ENCODE measurements at regions of chr2 and their contacts with region 1.

Region 1: GRCh38 chr2:240832205-240832727 is 12.2 kb upstream of the KIF1A start:
- DNase-seq: peak; percentile 96 to 99 (median 99)
- ATAC-seq: peak; percentile 93
- H3K4me3 ChIP-seq: peak overlapping the region; percentile 49 to 64
- H3K4me3 Mint-ChIP-seq: no peak overlapping the region
- H3K27ac ChIP-seq: peak overlapping the region in 1 of 2 experiments; percentile 19
- H3K27ac Mint-ChIP-seq: no peak overlapping the region
- H3K4me1 ChIP-seq: peaks cover 11% of the 10 kb centered on the region
- H3K4me1 Mint-ChIP-seq: peaks cover 6% of the 10 kb centered on the region
- H3K27me3 ChIP-seq: peaks cover 4 to 9% of the 10 kb centered on the region in 2 experiments
- H3K27me3 Mint-ChIP-seq: peaks cover 12% of the 10 kb centered on the region
- CTCF ChIP-seq: no peak

Region 2: DNA sequence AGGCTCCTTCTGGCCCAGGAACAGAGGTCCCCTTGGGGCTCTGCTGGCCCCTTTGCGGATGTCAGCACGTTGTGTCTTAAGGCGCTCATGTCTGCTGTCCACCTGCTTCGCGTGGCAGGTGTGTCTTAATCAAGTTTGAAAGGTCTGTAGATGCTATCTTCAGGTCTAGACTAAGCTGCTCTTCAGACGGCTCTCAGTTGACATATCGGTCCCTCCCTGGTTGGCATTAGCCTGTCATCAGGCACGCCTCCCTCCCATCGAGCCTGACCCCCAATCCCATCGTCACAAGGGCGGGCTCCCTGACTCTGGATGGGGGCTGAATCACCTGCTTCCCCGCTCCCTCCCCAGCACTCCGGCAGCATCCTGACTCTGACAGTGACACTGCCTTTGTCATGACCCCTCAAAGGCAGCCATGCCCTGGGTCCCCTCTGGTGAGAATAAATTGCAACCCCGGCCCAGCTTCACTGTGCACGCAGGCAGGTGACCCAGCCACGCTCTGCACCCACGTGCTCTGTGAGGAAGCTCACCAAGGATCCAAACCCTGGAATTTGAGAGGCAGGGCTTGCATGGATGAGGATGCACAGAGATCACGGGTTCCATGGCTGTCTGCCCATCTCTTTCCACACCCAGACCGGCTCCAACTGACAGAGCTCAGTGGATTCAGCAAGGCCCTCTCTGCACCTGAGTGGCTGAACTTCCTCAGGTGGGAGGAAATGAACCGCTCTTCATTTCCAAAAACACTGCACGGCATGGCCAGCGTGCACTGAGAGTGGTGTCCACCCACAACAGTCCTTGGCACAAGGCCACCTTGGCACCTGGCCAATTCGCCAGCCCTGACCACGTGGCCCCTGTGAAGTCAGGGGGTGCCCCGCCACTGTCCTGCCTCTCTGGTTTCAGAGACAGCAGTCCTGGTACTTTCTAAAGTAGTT is 507.0 kb before region 1 on chr2:
- CTCF ChIA-PET with region 1: no interaction called
- POLR2A ChIA-PET with region 1: no interaction called
- intact Hi-C with region 1: no loop called
- DNase-seq: no peak
- ATAC-seq: no peak
- H3K4me3 ChIP-seq: no peak overlapping the region
- H3K4me3 Mint-ChIP-seq: no peak overlapping the region
- H3K27ac ChIP-seq: no peak overlapping the region
- H3K27ac Mint-ChIP-seq: no peak overlapping the region
- H3K4me1 ChIP-seq: no peaks in the 10 kb centered on the region
- H3K4me1 Mint-ChIP-seq: no peaks in the 10 kb centered on the region
- H3K27me3 ChIP-seq: no peaks in the 10 kb centered on the region
- H3K27me3 Mint-ChIP-seq: peaks cover 8% of the 10 kb centered on the region
- CTCF ChIP-seq: no peak

Region 3: GRCh38 chr2:240434728-240435456 is 397.4 kb before region 1 on chr2:
- CTCF ChIA-PET with region 1: no interaction called
- POLR2A ChIA-PET with region 1: no interaction called
- intact Hi-C with region 1: loop called in 1 of 2 experiments (anchors 2 kb)
- DNase-seq: peak; percentile 67 to 91 (median 90)
- ATAC-seq: peak; percentile 86
- H3K4me3 ChIP-seq: peak overlapping the region; percentile 50 to 65
- H3K4me3 Mint-ChIP-seq: peak overlapping the region; percentile 85
- H3K27ac ChIP-seq: no peak overlapping the region
- H3K27ac Mint-ChIP-seq: no peak overlapping the region
- H3K4me1 ChIP-seq: peaks cover 10% of the 10 kb centered on the region
- H3K4me1 Mint-ChIP-seq: peaks cover 6% of the 10 kb centered on the region
- H3K27me3 ChIP-seq: peaks cover 15 to 17% of the 10 kb centered on the region in 2 experiments
- H3K27me3 Mint-ChIP-seq: peaks cover 18% of the 10 kb centered on the region
- CTCF ChIP-seq: no peak

Region 4: GRCh38 chr2:240586198-240586918 is 245.9 kb before region 1 on chr2 and contains the start of gene CAPN10:
- CTCF ChIA-PET with region 1: no interaction called
- POLR2A ChIA-PET with region 1: no interaction called
- intact Hi-C with region 1: loop called (anchors 1 kb)
- DNase-seq: peak; percentile 92 to 98 (median 97)
- ATAC-seq: peak; percentile 80
- H3K4me3 ChIP-seq: peak within 1 kb of the TSS; percentile 82 to 95
- H3K4me3 Mint-ChIP-seq: peak within 1 kb of the TSS; percentile 88
- H3K27ac ChIP-seq: peak within 1 kb of the TSS; percentile 86 to 90
- H3K27ac Mint-ChIP-seq: peak within 1 kb of the TSS; percentile 94
- H3K4me1 ChIP-seq: peaks cover 37% of the 10 kb centered on the region
- H3K4me1 Mint-ChIP-seq: peaks cover 57% of the 10 kb centered on the region
- H3K27me3 ChIP-seq: no peaks in the 10 kb centered on the region
- H3K27me3 Mint-ChIP-seq: no peaks in the 10 kb centered on the region
- CTCF ChIP-seq: no peak
- total RNA-seq, gene CAPN10: 65.9 to 68.9 TPM

Region 5: GRCh38 chr2:241217320-241218031 is 385.2 kb after region 1 on chr2:
- CTCF ChIA-PET with region 1: no interaction called
- POLR2A ChIA-PET with region 1: no interaction called
- intact Hi-C with region 1: loop called in 1 of 2 experiments (anchors 2 kb)
- DNase-seq: peak in 5 of 9 experiments; percentile 25 to 64 (median 58)
- ATAC-seq: peak; percentile 42
- H3K4me3 ChIP-seq: peak overlapping the region; percentile 48 to 59
- H3K4me3 Mint-ChIP-seq: peak overlapping the region; percentile 77
- H3K27ac ChIP-seq: peak overlapping the region in 1 of 2 experiments; percentile 32
- H3K27ac Mint-ChIP-seq: no peak overlapping the region
- H3K4me1 ChIP-seq: peaks cover 5% of the 10 kb centered on the region
- H3K4me1 Mint-ChIP-seq: peaks cover 14% of the 10 kb centered on the region
- H3K27me3 ChIP-seq: no peaks in the 10 kb centered on the region
- H3K27me3 Mint-ChIP-seq: no peaks in the 10 kb centered on the region
- CTCF ChIP-seq: no peak

Region 6: GRCh38 chr2:241609859-241610793 is 777.9 kb after region 1 on chr2:
- CTCF ChIA-PET with region 1: no interaction called
- POLR2A ChIA-PET with region 1: no interaction called
- intact Hi-C with region 1: loop called in 1 of 2 experiments (anchors 5 kb)
- DNase-seq: peak; percentile 81 to 96 (median 92)
- ATAC-seq: peak; percentile 99
- H3K4me3 ChIP-seq: peak overlapping the region; percentile 53 to 59
- H3K4me3 Mint-ChIP-seq: peak overlapping the region; percentile 63
- H3K27ac ChIP-seq: peak overlapping the region; percentile 51 to 77
- H3K27ac Mint-ChIP-seq: peak overlapping the region; percentile 72
- H3K4me1 ChIP-seq: peaks cover 23% of the 10 kb centered on the region
- H3K4me1 Mint-ChIP-seq: peaks cover 26% of the 10 kb centered on the region
- H3K27me3 ChIP-seq: no peaks in the 10 kb centered on the region
- H3K27me3 Mint-ChIP-seq: no peaks in the 10 kb centered on the region
- CTCF ChIP-seq: peak; percentile 63

Region 7: DNA sequence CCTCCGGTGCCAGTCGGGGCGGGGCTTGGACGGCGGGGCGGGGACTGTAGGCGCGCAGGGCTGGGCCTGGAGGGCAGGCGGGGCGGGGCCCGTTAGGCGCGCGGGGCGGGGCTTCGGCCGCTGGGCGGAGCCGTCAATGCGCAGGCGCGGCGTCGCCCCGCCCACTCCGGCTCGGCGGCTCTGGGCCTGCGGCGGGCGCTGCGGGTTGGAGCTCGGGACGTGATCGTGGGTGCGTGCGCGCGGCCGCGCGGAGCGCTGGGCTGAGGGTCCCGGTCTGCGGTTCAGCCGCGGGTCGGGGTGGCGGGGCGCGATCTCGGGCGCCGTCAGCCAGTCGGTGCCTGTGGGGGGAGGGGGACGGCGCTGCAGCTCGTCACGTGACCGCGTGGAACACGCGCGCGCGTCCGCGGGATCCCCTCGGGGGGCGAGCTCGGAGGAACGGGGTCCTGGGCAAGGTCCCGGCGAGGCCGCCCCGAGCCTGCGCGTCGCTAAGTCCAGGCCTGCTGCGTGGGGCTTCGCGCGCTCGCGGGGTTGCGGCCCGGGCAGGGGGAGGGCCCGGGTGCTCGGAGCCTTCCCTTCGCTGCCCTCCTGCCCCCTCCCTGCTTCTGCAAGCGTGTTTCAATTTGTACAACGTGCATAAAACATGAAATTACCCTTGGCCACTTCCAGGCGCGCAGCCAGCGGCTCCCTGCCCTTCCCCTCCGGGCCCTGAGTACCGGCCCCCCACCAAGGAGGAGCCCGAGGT is 902.4 kb after region 1 on chr2 and contains the start of gene D2HGDH:
- CTCF ChIA-PET with region 1: no interaction called
- POLR2A ChIA-PET with region 1: no interaction called
- intact Hi-C with region 1: loop called in 1 of 2 experiments (anchors 2 kb)
- DNase-seq: peak; percentile 84 to 97 (median 94)
- ATAC-seq: peak; percentile 92
- H3K4me3 ChIP-seq: peak within 1 kb of the TSS; percentile 68 to 70
- H3K4me3 Mint-ChIP-seq: peak within 1 kb of the TSS; percentile 86
- H3K27ac ChIP-seq: peak within 1 kb of the TSS; percentile 26 to 65
- H3K27ac Mint-ChIP-seq: peak within 1 kb of the TSS; percentile 85
- H3K4me1 ChIP-seq: peaks cover 22% of the 10 kb centered on the region
- H3K4me1 Mint-ChIP-seq: peaks cover 25% of the 10 kb centered on the region
- H3K27me3 ChIP-seq: no peaks in the 10 kb centered on the region
- H3K27me3 Mint-ChIP-seq: no peaks in the 10 kb centered on the region
- CTCF ChIP-seq: no peak
- total RNA-seq, gene D2HGDH: 41.6 to 46.4 TPM